HEK293 (cell line): ENCODE measurements at regions of chr20 and their contacts with region 1.

Region 1: DNA sequence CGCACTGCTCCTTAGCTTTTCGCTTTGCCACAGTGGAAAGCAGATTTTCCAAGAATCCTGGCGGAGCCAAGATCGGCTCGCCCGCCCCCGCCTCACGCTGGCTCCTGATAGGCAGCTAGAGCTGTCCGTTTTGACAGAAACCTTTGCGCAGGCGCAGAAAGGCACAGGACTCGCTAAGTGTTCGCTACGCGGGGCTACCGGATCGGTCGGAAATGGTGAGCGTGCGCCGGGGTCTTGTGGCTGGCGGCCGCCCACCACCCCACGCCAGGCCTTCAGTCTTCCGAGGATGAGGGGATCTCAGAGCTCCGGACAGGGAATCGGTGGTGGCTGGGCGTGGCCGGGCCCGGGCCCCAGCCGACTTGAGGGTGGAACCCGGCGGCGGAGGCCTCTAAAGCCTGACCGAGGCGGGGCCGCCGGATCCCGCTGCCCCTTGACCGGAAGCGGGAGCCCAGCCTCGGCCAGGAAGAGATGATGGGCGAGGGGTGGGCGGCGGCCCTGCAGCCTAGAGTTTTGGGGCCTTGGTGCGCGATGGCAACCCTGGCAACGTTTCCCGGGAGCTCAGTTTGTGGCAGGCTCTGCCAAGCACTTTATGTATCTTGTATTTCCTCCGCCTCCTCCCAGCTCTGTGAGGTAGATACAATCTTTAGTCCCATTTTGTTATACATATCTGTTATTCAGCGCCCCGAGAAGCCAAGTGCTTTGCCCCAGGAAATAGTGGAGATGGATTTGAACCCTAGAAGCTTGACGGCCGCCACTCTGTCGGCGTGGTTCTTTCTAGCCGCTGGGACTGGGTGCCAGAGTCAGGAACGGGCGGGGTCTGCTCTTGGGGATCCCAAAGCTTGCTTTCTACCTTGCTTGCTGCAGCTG is at the start of gene DYNLRB1:
- H3K4me3 ChIP-seq: peak within 1 kb of the TSS; percentile 80
- H3K27ac ChIP-seq: peak within 1 kb of the TSS; percentile 87
- H3K4me1 ChIP-seq: no peaks in the 10 kb centered on the region
- CTCF ChIP-seq: no peak; the same call in 1 of the 2 replicates

Region 2: GRCh38 chr20:34302723-34303528 is 213.6 kb before region 1 on chr20 and contains the start of gene AHCY:
- CTCF ChIA-PET with region 1: interaction called, 6 read pairs
- POLR2A ChIA-PET with region 1: interaction called, 18 read pairs
- H3K4me3 ChIP-seq: peak within 1 kb of the TSS; percentile 93
- H3K27ac ChIP-seq: peak within 1 kb of the TSS; percentile 90
- H3K4me1 ChIP-seq: peaks cover 16% of the 10 kb centered on the region
- CTCF ChIP-seq: peak; percentile 72

Region 3: DNA sequence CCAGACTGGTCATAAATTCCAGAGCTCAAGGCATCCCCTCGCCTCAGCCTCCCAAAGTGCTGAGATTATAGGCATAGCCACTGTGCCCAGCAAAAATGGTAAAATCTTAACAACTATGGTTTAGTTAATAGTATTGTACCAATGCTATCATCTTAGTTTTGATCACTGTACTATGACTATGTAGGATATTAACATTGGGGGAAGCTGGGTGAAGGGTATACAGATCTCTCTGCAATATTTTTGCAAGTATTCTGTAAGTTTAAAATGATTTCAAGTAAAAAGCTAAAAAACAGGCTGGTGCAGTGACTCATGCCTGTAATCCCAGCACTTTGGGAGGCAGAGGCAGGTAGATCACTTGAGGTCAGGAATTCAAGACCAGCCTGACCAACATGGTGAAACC is 152.6 kb after region 1 on chr20:
- CTCF ChIA-PET with region 1: no interaction called
- POLR2A ChIA-PET with region 1: interaction called, 10 read pairs
- H3K4me3 ChIP-seq: no peak overlapping the region
- H3K27ac ChIP-seq: no peak overlapping the region
- H3K4me1 ChIP-seq: no peaks in the 10 kb centered on the region
- CTCF ChIP-seq: no peak